ENCODE measurements at regions of chr12 and their contacts with region 1.

Region 1: DNA sequence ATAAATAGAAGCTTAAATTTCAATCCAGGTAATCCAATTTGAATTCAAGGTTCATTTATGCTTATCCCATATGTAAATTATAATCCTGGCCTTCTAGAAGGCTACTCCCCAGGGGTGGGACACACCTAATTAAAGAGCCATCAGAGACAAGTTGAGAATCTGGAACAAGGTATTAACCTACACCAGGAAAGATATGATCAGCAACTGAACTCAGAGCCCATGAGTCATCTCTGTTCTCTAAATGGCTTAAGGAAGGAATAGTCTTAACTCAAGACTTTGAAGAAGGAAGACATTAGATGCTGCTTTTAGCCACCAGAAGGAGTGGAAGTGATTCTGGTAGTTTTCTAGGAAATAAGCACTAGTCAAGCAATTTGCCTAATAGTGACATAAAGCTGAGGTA is 88.0 kb downstream of the KIF21A start:
- DNase-seq: no peak
- ATAC-seq: no peak
- H3K4me3 ChIP-seq: no peak overlapping the region
- H3K27ac ChIP-seq: no peak overlapping the region
- H3K4me1 ChIP-seq: peaks cover 10% of the 10 kb centered on the region; the same call in 1 of the 2 replicates
- H3K27me3 ChIP-seq: no peaks in the 10 kb centered on the region
- CTCF ChIP-seq: no peak
- EP300 ChIP-seq: no peak
- POLR2A ChIP-seq: no peak
- RAD21 ChIP-seq: no peak

Region 2: DNA sequence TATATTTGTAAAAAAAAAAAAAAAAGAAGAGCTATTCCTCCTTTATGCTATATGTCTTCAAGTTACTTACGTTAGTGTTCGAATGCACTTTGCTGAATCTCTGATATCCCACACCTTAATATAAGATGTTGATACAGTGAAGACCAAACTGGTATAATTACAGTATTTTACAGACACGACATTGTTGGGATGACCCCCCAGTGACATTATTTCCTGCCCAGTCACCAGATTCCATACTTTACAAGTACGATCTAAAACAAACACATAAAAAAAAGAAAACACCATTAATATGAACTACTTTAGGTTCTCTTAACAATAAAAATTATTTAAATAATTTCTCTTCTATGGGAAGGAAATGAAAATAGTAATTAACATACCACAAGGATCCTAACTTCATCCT is 45.4 kb before region 1 on chr12:
- CTCF ChIA-PET with region 1: no interaction called
- POLR2A ChIA-PET with region 1: no interaction called
- RAD21 ChIA-PET with region 1: no interaction called
- SMC1A ChIA-PET with region 1: interaction called, 3 read pairs
- in situ Hi-C with region 1: no loop called
- intact Hi-C with region 1: loop called (anchors 5 kb)
- DNase-seq: no peak
- ATAC-seq: no peak
- H3K4me3 ChIP-seq: no peak overlapping the region
- H3K27ac ChIP-seq: no peak overlapping the region
- H3K4me1 ChIP-seq: no peaks in the 10 kb centered on the region
- H3K27me3 ChIP-seq: no peaks in the 10 kb centered on the region
- CTCF ChIP-seq: no peak
- EP300 ChIP-seq: no peak
- POLR2A ChIP-seq: no peak
- RAD21 ChIP-seq: no peak

Region 3: DNA sequence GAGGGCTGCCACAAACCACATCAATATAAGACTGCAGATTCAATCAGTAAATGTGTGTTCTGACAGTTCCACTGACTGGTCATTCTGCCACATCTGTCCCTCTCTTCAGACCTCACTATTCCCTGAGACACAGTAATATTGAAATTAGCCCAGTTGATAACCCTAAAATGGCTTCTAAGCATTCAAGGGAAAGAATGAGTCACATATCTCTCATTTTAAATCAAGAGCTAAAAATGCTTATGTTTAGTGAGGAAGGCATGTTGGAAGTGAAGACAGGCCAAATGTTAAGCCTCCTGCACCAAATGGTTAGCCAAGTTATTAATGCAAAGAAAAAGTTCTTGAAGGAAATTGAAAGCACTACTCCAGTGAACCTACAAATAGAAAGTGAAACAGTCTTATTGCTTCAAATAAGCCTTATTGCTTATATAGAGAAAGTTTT is 112.5 kb after region 1 on chr12:
- CTCF ChIA-PET with region 1: no interaction called
- POLR2A ChIA-PET with region 1: no interaction called
- RAD21 ChIA-PET with region 1: no interaction called
- SMC1A ChIA-PET with region 1: no interaction called
- in situ Hi-C with region 1: no loop called
- intact Hi-C with region 1: no loop called
- DNase-seq: peak; percentile 36
- ATAC-seq: peak; percentile 96
- H3K4me3 ChIP-seq: no peak overlapping the region
- H3K27ac ChIP-seq: no peak overlapping the region
- H3K4me1 ChIP-seq: peaks cover 3% of the 10 kb centered on the region; the same call in 1 of the 2 replicates
- H3K27me3 ChIP-seq: no peaks in the 10 kb centered on the region
- CTCF ChIP-seq: no peak
- EP300 ChIP-seq: no peak
- POLR2A ChIP-seq: no peak
- RAD21 ChIP-seq: no peak